Kidney (tissue), 22 donors: ENCODE measurements at regions of chr19 and their contacts with region 1.

Region 1: GRCh38 chr19:40806488-40807468 is 7.8 kb downstream of the EGLN2 start:
- DNase-seq: peak; percentile 91 to 98 (median 96)
- H3K4me3 ChIP-seq: peak overlapping the region in 1 of 3 donors; percentile 14
- H3K27ac ChIP-seq: peak overlapping the region; percentile 65 to 76
- H3K4me1 ChIP-seq: peaks cover 0 to 63% (median 32%) of the 10 kb centered on the region in 3 donors
- H3K27me3 ChIP-seq: no peaks in the 10 kb centered on the region
- CTCF ChIP-seq: peak; percentile 69

Region 2: GRCh38 chr19:40662921-40663694 is 143.7 kb before region 1 on chr19:
- intact Hi-C with region 1: loop called (anchors 10 kb)
- DNase-seq: peak; percentile 90 to 97 (median 93)
- H3K4me3 ChIP-seq: peak overlapping the region; percentile 33 to 64 (median 50)
- H3K27ac ChIP-seq: peak overlapping the region; percentile 79 to 80
- H3K4me1 ChIP-seq: peaks cover 0 to 7% (median 0%) of the 10 kb centered on the region in 3 donors
- H3K27me3 ChIP-seq: no peaks in the 10 kb centered on the region
- CTCF ChIP-seq: peak; percentile 96

Region 3: DNA sequence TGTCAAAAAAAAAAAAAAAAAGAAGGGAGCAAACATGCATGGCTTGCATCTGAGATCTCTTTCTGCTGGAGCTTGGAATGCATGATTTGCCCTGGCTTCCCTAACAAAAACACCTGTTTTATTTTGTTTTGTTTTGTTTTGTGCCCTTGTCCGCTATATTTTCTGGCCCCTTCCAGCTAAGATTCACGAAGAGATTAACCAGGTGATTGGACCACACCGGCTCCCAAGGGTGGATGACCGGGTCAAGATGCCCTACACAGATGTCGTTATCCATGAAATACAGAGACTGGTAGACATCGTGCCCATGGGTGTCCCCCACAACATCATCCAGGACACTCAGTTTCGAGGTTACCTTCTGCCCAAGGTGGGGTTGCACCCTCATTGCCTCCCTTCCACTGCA is 91.2 kb after region 1 on chr19:
- intact Hi-C with region 1: no loop called
- DNase-seq: no peak
- H3K4me3 ChIP-seq: no peak overlapping the region
- H3K27ac ChIP-seq: no peak overlapping the region
- H3K4me1 ChIP-seq: no peaks in the 10 kb centered on the region
- H3K27me3 ChIP-seq: no peaks in the 10 kb centered on the region
- CTCF ChIP-seq: no peak